ENCODE measurements at regions of chr19 and their contacts with region 1.

Region 1: DNA sequence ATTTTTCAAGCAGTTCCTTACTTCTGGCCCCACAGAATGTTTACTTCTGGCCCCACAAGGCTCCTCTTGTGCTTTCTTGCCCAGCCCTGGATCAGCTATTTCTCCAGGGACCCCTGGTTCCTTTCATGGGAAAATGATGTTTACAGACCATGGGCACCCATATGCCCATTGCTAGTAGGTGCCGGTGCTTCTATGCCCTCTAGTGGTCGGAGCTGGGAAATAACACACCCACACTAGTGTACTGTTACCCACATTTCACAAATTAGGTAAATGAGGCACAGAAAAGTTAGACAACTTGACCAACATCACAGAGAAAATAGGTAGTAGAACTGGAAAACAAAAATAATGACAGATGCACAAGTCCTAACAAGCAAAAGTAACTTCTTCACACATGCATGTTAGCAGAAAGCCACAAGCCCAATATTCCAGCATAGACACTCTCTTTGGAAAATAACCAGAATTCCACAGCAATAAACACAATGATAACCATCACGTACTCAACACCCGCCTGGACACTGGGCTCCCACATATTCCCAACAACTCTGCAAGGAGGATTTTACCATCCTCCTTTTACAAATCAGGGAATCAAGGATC is 1.3 kb upstream of the CEACAM6 start:
- DNase-seq: peak; percentile 47 to 69
- ATAC-seq: peak; percentile 61 to 91; a peak in 5 of 6 replicates
- H3K4me3 ChIP-seq: no peak overlapping the region
- H3K27ac ChIP-seq: no peak overlapping the region
- H3K4me1 ChIP-seq: no peaks in the 10 kb centered on the region
- CTCF ChIP-seq: peak; percentile 87
- EP300 ChIP-seq: no peak
- POLR2A ChIP-seq: no peak
- RAD21 ChIP-seq: peak; percentile 45 to 66

Region 2: DNA sequence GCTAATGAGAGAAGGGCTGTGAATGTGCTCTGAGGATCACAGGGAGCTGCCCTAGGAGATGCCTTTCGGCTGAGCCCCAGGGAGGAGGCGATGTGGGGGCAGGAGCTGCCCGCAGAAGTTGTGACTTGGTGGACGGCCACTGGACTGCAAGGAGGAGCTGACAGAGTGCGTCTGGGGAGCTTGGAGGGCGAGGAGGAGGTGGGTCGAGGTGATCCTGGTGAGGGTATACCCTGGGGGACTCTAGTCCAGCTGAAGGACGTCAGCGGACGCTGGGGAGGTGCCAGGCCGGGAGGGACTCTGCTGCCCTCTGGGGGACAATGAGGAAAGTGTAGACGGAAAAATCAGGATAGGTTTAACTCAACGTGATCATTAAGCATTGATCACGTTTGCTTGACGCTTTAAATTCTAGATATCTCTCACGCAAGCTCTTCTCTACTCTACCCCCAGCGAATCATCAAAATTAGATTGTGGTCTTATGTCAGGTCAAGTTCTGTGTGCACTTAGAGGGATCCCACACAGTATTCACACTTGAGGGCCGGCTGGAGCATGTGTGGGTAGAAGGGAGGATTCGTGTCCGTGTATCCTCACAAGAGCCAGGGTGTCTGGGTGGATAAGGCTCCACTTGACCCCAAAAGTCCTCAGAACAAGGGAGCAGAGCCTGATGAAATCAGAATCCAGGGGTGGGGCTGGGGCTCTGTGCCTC is 62.6 kb before region 1 on chr19:
- CTCF ChIA-PET with region 1: interaction called, 48 read pairs
- POLR2A ChIA-PET with region 1: no interaction called
- DNase-seq: peak; percentile 42 to 76
- ATAC-seq: peak; percentile 72 to 88
- H3K4me3 ChIP-seq: no peak overlapping the region
- H3K27ac ChIP-seq: no peak overlapping the region
- H3K4me1 ChIP-seq: no peaks in the 10 kb centered on the region
- CTCF ChIP-seq: peak; percentile 77
- EP300 ChIP-seq: no peak
- POLR2A ChIP-seq: no peak
- RAD21 ChIP-seq: peak; percentile 51 to 67; a peak in 4 of 5 replicates

Region 3: GRCh38 chr19:41734617-41735016 is 19.4 kb before region 1 on chr19:
- CTCF ChIA-PET with region 1: interaction called, 107 read pairs
- POLR2A ChIA-PET with region 1: no interaction called
- DNase-seq: no peak
- ATAC-seq: peak in 1 of 2 experiments; percentile 26; a peak in 2 of 6 replicates
- H3K4me3 ChIP-seq: no peak overlapping the region
- H3K27ac ChIP-seq: no peak overlapping the region
- H3K4me1 ChIP-seq: no peaks in the 10 kb centered on the region
- CTCF ChIP-seq: no peak
- EP300 ChIP-seq: no peak
- POLR2A ChIP-seq: no peak
- RAD21 ChIP-seq: no peak

Region 4: GRCh38 chr19:41795031-41795461 is 41.0 kb after region 1 on chr19:
- CTCF ChIA-PET with region 1: interaction called, 196 read pairs
- POLR2A ChIA-PET with region 1: no interaction called
- DNase-seq: peak; percentile 49 to 70
- ATAC-seq: peak; percentile 61 to 89
- H3K4me3 ChIP-seq: no peak overlapping the region
- H3K27ac ChIP-seq: no peak overlapping the region
- H3K4me1 ChIP-seq: 0 out of 3 replicates have a peak, but pooled peaks cover 11% of the 10 kb centered on the region
- CTCF ChIP-seq: peak; percentile 96
- EP300 ChIP-seq: no peak
- POLR2A ChIP-seq: no peak
- RAD21 ChIP-seq: peak; percentile 32 to 47; a peak in 4 of 5 replicates

Region 5: GRCh38 chr19:41821003-41821735 is 67.1 kb after region 1 on chr19:
- CTCF ChIA-PET with region 1: interaction called, 111 read pairs
- POLR2A ChIA-PET with region 1: no interaction called
- DNase-seq: peak; percentile 82 to 94
- ATAC-seq: peak; percentile 92 to 96
- H3K4me3 ChIP-seq: no peak overlapping the region
- H3K27ac ChIP-seq: no peak overlapping the region
- H3K4me1 ChIP-seq: no peaks in the 10 kb centered on the region
- CTCF ChIP-seq: peak; percentile 91
- EP300 ChIP-seq: no peak
- POLR2A ChIP-seq: no peak
- RAD21 ChIP-seq: peak; percentile 86 to 96

Region 6: DNA sequence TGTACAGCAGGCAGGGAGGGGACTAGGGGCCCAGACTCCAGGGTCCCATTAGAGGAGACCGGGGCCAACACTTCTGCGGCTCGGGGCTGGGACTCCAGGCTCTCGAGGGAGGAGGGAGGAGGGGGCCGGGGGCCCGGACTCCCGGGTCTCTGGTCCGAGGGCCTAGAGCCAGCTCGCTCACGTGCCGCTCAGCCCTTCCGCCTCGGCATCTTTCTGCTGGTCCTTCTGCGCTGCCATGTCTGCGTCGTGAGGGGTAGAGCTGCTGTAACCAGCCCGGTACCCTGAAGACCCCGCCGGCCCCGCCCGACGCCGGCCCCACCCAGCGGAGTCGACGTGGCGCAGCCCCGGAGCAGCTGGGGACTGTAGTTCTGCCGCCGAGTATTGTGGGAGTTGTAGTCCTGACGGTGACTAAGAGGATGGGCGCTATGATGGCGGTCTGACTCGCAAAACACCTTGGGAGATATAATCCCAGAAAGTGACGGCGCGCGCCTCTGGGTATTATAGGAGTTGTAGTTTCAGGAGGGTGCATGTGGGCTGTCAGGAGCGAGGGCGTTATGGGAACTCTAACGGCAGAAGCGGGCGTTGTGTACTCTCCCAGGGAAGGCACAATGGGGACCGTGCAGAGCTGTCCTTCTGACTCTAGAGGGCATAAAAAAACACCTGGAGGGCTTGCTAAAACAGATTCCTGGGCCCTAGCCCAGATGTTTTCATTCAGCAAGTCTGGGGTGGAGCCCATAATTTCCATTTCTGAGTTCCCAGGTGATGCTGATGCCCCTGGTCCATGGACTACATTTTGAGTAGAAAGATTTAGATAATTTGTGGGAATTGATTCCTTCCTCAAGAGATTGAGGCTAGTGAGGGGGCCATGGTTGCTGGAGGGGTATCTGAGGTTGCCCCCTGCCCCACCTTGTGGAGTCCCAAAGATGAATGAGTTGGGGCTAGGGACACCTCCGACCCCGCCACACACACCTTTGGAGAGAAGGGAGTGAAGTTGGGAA is 205.3 kb after region 1 on chr19 and contains the start of gene RABAC1:
- CTCF ChIA-PET with region 1: interaction called, 11 read pairs
- POLR2A ChIA-PET with region 1: no interaction called
- DNase-seq: peak; percentile 97 to 100
- ATAC-seq: peak; percentile 78 to 90
- H3K4me3 ChIP-seq: peak within 1 kb of the TSS; percentile 76
- H3K27ac ChIP-seq: peak within 1 kb of the TSS; percentile 80 to 87
- H3K4me1 ChIP-seq: peaks cover 13% of the 10 kb centered on the region
- CTCF ChIP-seq: peak; percentile 54
- EP300 ChIP-seq: no peak
- POLR2A ChIP-seq: peak; percentile 70
- RAD21 ChIP-seq: peak in 1 of 2 experiments; percentile 35; a peak in 1 of 5 replicates
- polyA plus RNA-seq, gene RABAC1: 117 and 137 TPM in 2 replicates

Measured in A549 (cell line).